ENCODE measurements at regions of chr1 and their contacts with region 1.

Region 1: DNA sequence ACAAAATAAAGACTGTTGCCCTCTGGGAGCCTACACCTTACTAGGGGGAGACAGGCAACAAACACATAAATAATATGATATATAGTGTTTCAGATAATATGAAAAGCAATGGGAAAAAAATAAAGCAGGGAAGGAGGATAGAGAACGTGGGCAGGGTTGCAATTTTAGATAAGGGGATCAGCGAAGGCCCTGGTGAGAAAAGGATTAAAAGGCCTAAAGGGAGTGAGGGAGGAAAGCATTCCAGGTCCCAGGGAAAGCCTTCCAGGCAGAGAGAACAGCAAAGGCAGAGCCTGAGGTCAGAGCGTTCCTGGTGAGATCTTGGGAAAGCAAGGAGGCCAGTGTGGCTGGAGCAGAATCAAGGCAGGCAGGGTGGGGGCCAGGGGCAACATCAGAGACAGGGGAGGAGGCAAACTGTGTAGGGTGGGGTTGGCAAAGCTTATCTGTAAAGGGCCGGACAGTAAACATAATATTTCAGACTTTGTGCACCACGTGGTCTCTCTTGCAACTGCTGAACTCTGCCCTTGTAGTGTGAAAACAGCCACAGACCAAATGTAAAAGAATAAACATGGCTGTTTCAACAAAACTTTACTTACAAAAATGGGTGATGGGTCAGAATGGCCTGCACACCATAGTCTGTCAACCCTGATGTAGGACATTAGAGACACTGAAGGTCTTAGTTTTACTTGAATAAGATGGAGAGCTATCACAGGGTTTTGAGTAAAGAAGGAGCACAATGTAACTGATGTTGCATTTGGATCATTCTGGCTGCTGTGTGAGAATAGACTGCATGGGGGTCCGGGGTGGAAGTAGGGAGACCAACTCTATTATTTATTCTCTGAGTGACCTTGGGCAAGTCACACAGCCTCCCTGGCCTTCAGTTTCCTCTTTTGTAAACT is 13.3 kb upstream of the CPT2 start:
- DNase-seq: no peak
- ATAC-seq: no peak; a peak in 1 of 6 replicates
- H3K4me3 ChIP-seq: no peak overlapping the region
- H3K27ac ChIP-seq: peak overlapping the region in 1 of 2 experiments; percentile 64; a peak in 3 of 6 replicates
- H3K4me1 ChIP-seq: peaks cover 14% of the 10 kb centered on the region; the same call in 2 of the 3 replicates
- CTCF ChIP-seq: no peak
- EP300 ChIP-seq: no peak
- POLR2A ChIP-seq: no peak
- RAD21 ChIP-seq: no peak

Region 2: GRCh38 chr1:52920791-52921291 is 262.5 kb before region 1 on chr1:
- CTCF ChIA-PET with region 1: interaction called, 14 read pairs
- POLR2A ChIA-PET with region 1: no interaction called
- DNase-seq: no peak
- ATAC-seq: peak in 1 of 2 experiments; percentile 9; a peak in 3 of 6 replicates
- H3K4me3 ChIP-seq: peak overlapping the region; percentile 53
- H3K27ac ChIP-seq: peak overlapping the region; percentile 81 to 94; a peak in 5 of 6 replicates
- H3K4me1 ChIP-seq: peaks cover 9% of the 10 kb centered on the region; the same call in 2 of the 3 replicates
- CTCF ChIP-seq: no peak
- EP300 ChIP-seq: no peak
- POLR2A ChIP-seq: no peak
- RAD21 ChIP-seq: no peak

Region 3: DNA sequence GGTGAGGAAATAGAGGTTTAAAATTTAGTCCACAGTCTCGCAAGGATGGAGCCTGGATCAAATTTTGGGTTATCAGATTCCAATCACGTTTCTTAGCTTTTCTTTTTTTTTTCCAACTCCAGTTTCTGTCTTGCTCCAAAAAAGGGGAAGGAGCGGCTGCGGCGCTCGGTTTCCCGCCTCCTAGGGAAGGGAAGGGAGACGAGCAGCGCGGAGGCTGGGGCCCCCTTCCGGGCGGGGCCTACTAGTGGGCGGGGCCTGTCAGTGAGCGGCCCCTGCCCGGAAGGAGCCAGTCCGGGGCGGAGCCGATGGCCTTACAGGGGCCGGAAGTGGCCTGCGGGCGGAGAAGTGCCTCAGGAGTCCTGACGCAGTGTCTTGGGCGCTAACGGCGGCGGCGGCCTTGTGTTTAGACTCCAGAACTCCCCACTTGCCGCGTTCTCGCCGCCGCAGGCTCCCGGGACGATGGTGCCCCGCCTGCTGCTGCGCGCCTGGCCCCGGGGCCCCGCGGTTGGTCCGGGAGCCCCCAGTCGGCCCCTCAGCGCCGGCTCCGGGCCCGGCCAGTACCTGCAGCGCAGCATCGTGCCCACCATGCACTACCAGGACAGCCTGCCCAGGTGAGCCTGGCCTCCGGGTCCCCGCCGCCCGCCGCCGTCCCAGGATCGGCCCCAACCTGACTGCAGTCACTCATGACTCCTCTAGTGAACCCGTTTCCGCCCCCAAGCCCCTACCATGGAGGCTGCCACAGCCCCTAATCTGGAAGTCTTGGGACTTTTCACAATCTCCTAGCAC is 13.3 kb after region 1 on chr1 and contains the start of gene CPT2:
- CTCF ChIA-PET with region 1: interaction called, 24 read pairs
- POLR2A ChIA-PET with region 1: no interaction called
- DNase-seq: peak; percentile 85 to 88
- ATAC-seq: peak; percentile 99 to 100
- H3K4me3 ChIP-seq: peak within 1 kb of the TSS; percentile 84
- H3K27ac ChIP-seq: peak within 1 kb of the TSS; percentile 87 to 100
- H3K4me1 ChIP-seq: peaks cover 9% of the 10 kb centered on the region
- CTCF ChIP-seq: no peak
- EP300 ChIP-seq: no peak
- POLR2A ChIP-seq: peak; percentile 83
- RAD21 ChIP-seq: no peak
- polyA plus RNA-seq, gene CPT2: 8.4 and 10.0 TPM in 2 replicates

Region 4: DNA sequence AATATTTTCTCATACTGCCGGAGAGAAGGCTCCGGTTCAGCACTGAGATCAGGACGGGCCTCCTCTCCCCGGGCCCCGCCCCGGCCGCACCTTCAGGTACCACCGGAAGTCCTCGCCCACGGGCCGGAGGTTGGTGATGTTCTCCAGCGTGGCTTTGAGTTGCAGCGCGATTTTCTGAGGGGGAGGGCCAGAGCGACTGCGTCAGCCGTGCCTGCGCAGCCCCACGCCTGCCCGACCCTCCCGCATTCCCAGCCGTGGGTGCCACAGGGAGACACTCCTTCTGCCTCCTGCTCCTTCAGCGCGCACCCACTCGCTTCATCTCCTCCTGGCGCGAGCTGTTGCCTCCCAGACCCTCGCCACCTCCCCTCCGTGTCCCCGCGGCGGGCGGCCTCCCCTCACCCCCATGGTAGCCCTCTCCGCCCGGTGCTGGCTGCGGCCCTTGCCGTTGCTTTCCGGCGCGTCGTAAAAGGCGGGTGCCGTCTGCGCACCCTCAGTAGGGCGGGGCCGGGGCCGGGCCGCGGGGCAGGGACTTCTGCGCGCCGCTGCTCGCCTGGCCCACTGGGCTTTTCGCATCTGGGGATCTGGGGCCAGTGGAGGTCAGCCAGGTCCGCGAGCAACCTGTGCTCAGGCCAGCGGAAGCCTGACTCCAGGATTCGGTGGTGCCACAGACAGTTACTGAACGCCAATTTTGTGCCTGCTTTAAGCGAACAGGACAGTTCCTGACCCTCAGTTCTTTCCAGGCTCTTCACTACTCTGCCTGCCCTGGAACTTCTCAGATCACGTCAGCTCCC is 37.0 kb after region 1 on chr1 and contains the start of gene CZIB:
- CTCF ChIA-PET with region 1: no interaction called
- POLR2A ChIA-PET with region 1: no interaction called
- DNase-seq: peak; percentile 73 to 92
- ATAC-seq: peak; percentile 95
- H3K4me3 ChIP-seq: peak within 1 kb of the TSS; percentile 64
- H3K27ac ChIP-seq: peak within 1 kb of the TSS; percentile 88 to 99
- H3K4me1 ChIP-seq: peaks cover 11% of the 10 kb centered on the region; the same call in 2 of the 3 replicates
- CTCF ChIP-seq: no peak
- EP300 ChIP-seq: no peak
- POLR2A ChIP-seq: peak; percentile 72
- RAD21 ChIP-seq: no peak
- polyA plus RNA-seq, gene CZIB: 60.1 and 66.2 TPM in 2 replicates